ENCODE measurements at regions of chr2 and their contacts with region 1.

Region 1: DNA sequence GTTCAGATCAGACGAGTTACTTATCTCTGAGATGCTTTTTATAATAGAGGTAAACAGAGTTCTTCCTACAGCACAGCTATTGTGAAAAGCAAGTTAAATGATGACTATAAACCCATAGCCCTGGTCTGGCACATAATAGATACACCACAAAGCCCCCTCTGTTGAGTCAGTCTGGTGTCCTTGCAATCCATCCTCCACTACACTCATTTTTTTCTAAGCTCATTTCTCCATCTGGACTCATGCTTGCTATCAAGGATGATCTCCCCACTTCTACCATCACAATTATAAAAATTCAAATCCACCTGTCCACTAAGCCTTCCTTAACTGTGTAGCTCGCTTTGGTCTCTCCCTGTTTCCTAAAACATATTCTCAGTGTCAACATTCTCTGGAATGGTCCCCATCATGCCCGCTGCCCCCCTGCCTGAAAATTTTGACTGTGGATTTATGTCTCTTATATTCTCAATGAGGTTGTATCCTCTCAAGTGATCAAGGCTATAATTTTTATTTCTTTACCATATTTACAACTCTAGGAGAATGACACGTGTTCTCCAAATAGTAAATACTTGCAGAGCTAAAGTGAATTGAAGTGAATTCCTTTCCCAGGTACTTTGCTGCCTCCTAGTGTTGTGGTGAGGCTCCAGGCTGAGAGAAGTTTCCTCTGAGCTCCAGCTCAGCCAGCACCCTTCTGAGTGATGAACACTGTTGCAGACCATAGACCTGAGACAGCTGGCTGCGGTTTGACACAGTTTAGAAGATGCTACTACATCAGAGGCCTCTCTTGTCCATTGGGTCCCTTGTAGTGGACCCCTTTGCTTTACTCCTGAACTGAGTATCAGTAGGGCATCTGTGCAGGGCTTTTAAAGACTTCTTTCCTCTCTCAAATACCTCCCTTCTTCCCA is 108.7 kb downstream of the DPP10 start:
- DNase-seq: no peak
- ATAC-seq: peak; percentile 50

Region 2: DNA sequence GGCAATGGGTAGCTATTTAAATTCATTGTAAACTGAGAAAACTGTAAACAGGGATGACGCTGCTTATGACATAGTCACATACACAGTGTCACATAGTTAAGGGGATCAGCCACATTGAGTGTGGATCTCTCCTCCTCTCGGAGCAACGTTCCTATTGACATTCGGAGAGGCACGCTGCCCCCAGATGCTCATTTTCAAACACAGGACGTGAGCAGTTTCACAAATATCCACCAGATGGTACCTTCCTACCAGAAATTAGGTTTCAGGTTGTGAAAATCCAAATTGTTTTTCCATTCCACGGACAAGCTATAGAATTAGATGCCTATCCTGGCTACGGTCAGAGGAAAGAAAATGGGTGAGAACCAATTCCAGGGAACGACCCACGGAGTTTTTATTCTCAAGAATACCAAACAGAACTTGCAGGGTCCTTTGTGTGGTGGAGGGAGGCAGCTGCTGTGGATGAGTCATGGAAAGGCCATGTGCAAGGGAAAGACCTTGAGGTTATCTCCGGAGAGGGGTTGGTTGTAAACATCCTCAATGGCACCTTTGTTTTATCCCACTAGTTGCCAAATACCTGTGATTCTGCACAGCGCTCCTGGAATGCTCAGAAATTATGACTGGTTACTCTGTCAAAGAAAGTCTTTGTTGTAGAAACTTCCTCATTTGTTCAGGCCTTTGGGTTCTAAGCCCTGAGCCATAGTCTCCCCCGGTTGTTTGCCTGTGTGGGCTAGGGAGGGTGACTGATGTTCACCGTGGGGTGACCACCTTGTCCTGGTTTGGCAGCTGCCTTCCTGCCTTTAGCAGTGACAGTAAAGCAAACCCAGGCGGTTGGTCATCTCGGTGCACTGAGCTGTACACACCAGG is 573.3 kb before region 1 on chr2:
- intact Hi-C with region 1: loop called (anchors 5 kb)
- DNase-seq: no peak
- ATAC-seq: no peak

Region 3: GRCh38 chr2:114515882-114516281 is 35.3 kb before region 1 on chr2:
- intact Hi-C with region 1: no loop called
- DNase-seq: no peak
- ATAC-seq: no peak

Region 4: DNA sequence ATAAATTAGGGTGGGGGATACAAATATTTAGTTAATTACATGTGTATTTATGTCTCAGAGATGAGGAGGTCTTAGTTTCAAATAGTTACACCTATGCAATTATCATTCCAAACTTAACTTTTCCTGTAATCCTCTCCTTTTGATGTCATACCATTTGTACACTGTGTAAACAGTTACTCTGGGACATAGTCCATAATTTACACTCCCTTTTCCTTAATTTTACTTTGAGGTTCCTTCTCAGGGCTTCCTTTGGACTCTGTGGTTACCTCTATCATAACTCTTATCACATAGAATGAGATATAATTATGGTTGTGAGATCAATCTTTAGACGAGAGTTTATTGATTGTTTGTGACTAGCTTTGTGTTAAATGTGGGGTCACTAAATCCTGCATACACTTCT is 24.3 kb before region 1 on chr2:
- intact Hi-C with region 1: no loop called
- DNase-seq: no peak
- ATAC-seq: no peak

Region 5: DNA sequence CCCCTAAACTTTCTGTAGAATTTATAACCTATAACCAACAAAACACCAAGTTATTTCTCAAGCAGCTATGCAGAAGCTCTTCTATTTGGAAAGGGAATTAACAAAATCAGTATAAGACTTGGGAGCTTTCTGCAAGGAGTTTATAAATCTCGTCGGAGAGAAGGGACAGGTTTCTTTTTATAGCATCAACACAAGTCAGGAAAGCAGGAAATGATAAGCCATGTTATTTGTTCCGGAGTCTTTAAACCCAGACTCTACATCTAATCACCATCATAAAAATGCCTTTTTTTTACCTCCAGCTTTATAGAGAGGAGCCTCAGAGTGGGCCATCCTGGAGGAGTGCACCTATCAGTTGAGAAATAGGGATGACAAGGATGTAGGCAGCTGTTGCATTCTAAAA is 28.4 kb after region 1 on chr2:
- intact Hi-C with region 1: no loop called
- DNase-seq: no peak
- ATAC-seq: no peak

Region 6: GRCh38 chr2:114784890-114785583 is 233.9 kb after region 1 on chr2:
- intact Hi-C with region 1: no loop called
- DNase-seq: no peak
- ATAC-seq: no peak